Activated CD4-positive, alpha-beta T cell treated with anti-CD3 and anti-CD28 coated beads for 36 hours (primary cell): ENCODE measurements at regions of chr2 and their contacts with region 1.

Region 1: GRCh38 chr2:95115418-95115817 is 6.2 kb downstream of the MRPS5 start:
- DNase-seq: peak; percentile 85
- ATAC-seq: peak; percentile 98
- H3K4me3 Mint-ChIP-seq: no peak overlapping the region
- H3K27ac Mint-ChIP-seq: no peak overlapping the region
- H3K4me1 Mint-ChIP-seq: peaks cover 39% of the 10 kb centered on the region
- H3K27me3 Mint-ChIP-seq: no peaks in the 10 kb centered on the region

Region 2: DNA sequence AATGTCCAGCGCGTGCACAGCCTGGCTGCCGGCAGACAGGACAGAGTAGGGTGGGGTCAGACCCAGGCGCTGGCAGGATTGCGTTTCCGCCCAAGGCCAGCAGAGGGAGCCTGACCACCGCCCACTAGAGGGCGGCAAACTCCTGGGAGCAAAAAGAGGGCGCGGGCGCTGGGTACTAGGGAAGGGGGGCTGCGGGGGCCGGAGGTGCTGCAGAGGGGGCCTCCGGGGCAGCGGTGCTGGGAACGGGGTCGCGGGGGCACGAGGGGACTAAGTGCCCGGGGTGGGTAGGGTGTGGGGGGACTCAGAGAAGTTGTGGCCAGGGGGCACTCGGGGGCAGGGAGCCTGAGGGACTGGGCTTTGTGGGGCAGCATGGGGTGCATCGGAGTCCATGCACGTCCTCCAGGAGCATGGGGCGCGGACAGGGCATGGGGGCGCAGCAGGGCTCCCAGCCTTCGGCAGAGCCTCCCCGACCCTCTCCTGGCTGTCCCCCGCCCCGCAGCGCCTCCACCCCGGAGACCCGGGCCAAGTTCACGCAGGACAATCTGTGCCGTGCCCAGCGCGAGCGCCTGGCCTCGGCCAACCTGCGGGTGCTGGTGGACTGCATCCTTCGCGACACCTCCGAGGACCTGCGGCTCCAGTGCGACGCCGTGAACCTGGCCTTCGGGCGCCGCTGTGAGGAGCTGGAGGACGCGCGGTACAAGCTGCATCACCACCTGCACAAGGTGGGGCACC is 241.0 kb before region 1 on chr2:
- CTCF ChIA-PET with region 1: no interaction called
- POLR2A ChIA-PET with region 1: no interaction called
- intact Hi-C with region 1: loop called in 1 of 2 experiments (anchors 10 kb)
- DNase-seq: peak; percentile 81
- ATAC-seq: peak; percentile 72
- H3K4me3 Mint-ChIP-seq: no peak overlapping the region
- H3K27ac Mint-ChIP-seq: no peak overlapping the region
- H3K4me1 Mint-ChIP-seq: no peaks in the 10 kb centered on the region
- H3K27me3 Mint-ChIP-seq: peaks cover 17% of the 10 kb centered on the region

Region 3: DNA sequence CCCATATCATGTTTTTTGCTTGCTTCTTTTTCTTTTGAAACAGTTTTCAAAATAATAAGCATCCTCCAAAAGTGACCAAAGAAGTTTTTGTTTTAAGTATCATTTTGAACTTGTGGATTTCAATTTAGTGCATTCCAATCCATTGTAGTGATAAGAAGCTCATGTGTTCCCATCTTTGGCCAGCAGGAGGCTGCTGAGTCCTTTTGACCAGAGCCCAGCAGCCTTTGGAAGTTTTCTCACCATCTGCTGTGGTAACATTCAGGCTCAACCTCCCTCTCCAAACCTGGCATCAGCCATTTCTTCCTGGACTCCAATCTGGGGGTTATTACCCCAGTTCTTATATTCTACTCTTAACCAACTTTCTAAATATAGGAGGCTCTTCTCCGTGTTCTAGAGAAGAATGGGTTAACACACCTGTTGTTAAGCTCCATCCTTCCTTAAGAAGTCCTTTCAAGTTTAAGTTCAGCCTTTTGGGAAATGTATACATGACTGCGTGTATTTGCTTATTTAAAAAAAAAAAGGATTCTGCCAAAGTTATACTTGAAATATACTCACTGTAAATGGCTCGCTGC is 128.9 kb before region 1 on chr2:
- CTCF ChIA-PET with region 1: interaction called, 6 read pairs
- POLR2A ChIA-PET with region 1: no interaction called
- intact Hi-C with region 1: loop called in 1 of 2 experiments (anchors 1 kb)
- DNase-seq: peak; percentile 70
- ATAC-seq: peak; percentile 55
- H3K4me3 Mint-ChIP-seq: no peak overlapping the region
- H3K27ac Mint-ChIP-seq: no peak overlapping the region
- H3K4me1 Mint-ChIP-seq: no peaks in the 10 kb centered on the region
- H3K27me3 Mint-ChIP-seq: peaks cover 3% of the 10 kb centered on the region

Region 4: GRCh38 chr2:95012881-95013550 is 102.4 kb before region 1 on chr2:
- CTCF ChIA-PET with region 1: interaction called, 11 read pairs
- POLR2A ChIA-PET with region 1: no interaction called
- intact Hi-C with region 1: no loop called
- DNase-seq: no peak
- ATAC-seq: peak; percentile 43
- H3K4me3 Mint-ChIP-seq: no peak overlapping the region
- H3K27ac Mint-ChIP-seq: no peak overlapping the region
- H3K4me1 Mint-ChIP-seq: peaks cover 3% of the 10 kb centered on the region
- H3K27me3 Mint-ChIP-seq: no peaks in the 10 kb centered on the region

Region 5: GRCh38 chr2:95082477-95082876 is 32.9 kb before region 1 on chr2:
- CTCF ChIA-PET with region 1: interaction called, 49 read pairs
- POLR2A ChIA-PET with region 1: no interaction called
- intact Hi-C with region 1: loop called in 1 of 2 experiments (anchors 2 kb)
- DNase-seq: no peak
- ATAC-seq: no peak
- H3K4me3 Mint-ChIP-seq: no peak overlapping the region
- H3K27ac Mint-ChIP-seq: no peak overlapping the region
- H3K4me1 Mint-ChIP-seq: peaks cover 26% of the 10 kb centered on the region
- H3K27me3 Mint-ChIP-seq: no peaks in the 10 kb centered on the region

Region 6: DNA sequence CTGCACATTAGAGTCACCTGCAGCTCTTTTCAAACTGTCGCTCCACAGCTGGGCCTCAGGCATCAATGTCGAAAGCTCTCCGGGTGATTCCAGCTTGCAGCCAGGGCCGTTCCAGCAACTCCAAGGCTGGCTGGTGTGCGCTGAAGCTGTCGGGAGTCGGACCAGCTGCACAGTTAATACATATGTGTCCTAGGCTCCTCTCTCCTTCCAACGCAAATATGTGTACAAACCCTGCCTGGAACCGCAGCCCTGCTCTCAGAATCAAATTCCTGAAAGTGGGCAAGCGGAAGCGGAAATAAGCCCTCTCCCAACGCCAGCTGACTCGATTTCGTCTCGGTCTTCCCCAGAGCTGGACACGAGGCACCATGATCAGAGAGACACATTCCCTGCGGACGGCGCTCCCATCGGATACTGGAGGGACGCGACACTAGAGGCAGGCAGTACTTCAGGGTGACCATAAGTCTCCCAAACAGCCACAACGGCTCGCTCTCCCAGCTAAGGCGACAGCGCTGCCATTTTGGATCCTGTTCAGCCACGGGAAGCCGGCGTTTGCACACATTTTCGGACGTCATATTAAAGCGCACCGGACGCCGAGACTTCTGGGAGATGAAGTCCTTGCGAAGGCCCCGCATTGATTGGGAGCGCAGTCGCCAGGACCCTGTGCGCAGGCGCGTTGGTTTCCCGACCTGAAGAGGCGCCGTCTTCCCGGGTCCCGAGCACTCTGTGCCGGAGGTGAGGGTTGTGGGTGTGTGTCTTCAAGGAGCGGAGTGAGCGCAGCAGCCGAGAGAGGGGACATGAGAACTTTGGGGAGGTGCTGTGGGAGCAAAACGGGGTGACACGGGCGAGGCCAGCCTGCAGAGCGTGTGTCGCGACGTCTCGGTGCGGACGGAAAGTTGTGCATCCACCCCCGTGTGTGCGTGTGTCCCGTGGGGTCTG is 50.0 kb after region 1 on chr2 and contains the start of gene ZNF2:
- CTCF ChIA-PET with region 1: interaction called, 10 read pairs
- POLR2A ChIA-PET with region 1: no interaction called
- intact Hi-C with region 1: no loop called
- DNase-seq: peak; percentile 98
- ATAC-seq: peak; percentile 98
- H3K4me3 Mint-ChIP-seq: peak within 1 kb of the TSS; percentile 96
- H3K27ac Mint-ChIP-seq: peak within 1 kb of the TSS; percentile 94
- H3K4me1 Mint-ChIP-seq: peaks cover 24% of the 10 kb centered on the region
- H3K27me3 Mint-ChIP-seq: no peaks in the 10 kb centered on the region
- total RNA-seq, gene ZNF2: 4.3 to 5.1 TPM

Region 7: DNA sequence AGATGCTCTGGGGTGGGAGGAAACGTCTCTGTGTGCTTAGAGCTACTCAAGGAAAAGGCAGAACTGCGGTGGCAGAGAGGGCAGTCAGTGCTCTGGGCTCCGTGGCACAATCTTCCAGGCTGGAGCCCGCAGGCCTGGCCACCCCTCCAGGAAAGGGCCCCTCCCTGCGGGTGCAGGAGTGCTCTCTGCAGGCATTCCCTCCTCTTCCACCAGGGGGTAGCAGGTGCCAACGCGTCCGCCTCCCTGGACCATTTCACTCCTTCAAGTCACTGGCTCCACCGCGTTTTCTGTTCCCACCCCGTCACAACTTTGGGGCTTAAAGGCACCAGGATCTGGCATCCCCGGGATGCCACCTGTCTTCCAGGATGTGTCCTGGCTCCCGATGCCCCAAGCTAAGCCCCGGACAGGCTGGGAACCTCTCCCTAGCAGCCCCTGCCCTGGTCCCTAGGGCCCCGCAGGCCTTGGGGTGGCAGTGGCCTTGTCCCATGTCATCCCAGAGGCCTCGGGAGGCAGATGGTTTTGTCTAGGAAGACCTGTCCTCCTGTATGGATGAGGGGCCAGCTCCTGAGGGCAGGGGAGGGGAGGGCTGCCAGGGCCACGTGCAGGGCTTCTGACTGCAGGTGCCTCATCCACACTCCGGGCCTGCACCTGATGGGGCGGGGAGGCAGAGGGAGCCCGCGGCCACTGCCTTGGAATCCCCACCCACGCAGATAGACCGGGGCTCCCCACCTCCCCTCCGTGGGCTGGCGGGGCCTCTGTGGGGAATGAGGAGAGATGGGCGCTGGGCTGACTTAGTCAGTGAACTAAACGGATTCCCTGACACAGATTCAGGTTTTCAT is 208.1 kb after region 1 on chr2:
- CTCF ChIA-PET with region 1: no interaction called
- POLR2A ChIA-PET with region 1: no interaction called
- intact Hi-C with region 1: no loop called
- DNase-seq: peak; percentile 47
- ATAC-seq: peak; percentile 68
- H3K4me3 Mint-ChIP-seq: no peak overlapping the region
- H3K27ac Mint-ChIP-seq: no peak overlapping the region
- H3K4me1 Mint-ChIP-seq: no peaks in the 10 kb centered on the region
- H3K27me3 Mint-ChIP-seq: no peaks in the 10 kb centered on the region